ENCODE measurements at regions of chr4 and their contacts with region 1.

Region 1: GRCh38 chr4:139603576-139604387 is 47.8 kb upstream of the SETD7 start:
- DNase-seq: peak; percentile 56 to 85
- H3K4me3 ChIP-seq: no peak overlapping the region
- H3K27ac ChIP-seq: no peak overlapping the region
- H3K4me1 ChIP-seq: peaks cover 50% of the 10 kb centered on the region
- H3K27me3 ChIP-seq: no peaks in the 10 kb centered on the region
- CTCF ChIP-seq: peak; percentile 80

Region 2: DNA sequence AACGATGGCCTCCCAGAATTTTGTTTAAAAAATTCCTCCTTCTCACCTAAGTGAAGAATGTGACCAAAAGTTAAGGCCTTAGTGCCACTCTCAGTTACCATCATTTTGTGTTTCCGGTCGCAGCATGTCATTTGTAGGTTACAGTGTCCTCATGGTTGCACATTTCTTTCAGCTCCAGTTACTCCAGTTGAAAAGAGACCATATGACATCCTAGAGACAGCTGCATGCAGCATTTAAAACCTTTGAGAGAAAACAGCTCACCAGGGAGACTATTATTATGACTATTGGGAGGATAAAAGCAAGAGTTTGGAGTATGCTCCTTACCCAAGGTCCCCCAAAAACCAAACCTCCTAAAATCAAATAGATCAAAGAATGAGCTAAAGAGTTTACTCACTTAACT is 369.5 kb before region 1 on chr4:
- CTCF ChIA-PET with region 1: no interaction called
- POLR2A ChIA-PET with region 1: no interaction called
- intact Hi-C with region 1: no loop called
- DNase-seq: no peak
- H3K4me3 ChIP-seq: no peak overlapping the region
- H3K27ac ChIP-seq: no peak overlapping the region
- H3K4me1 ChIP-seq: no peaks in the 10 kb centered on the region
- H3K27me3 ChIP-seq: no peaks in the 10 kb centered on the region
- CTCF ChIP-seq: no peak

Region 3: DNA sequence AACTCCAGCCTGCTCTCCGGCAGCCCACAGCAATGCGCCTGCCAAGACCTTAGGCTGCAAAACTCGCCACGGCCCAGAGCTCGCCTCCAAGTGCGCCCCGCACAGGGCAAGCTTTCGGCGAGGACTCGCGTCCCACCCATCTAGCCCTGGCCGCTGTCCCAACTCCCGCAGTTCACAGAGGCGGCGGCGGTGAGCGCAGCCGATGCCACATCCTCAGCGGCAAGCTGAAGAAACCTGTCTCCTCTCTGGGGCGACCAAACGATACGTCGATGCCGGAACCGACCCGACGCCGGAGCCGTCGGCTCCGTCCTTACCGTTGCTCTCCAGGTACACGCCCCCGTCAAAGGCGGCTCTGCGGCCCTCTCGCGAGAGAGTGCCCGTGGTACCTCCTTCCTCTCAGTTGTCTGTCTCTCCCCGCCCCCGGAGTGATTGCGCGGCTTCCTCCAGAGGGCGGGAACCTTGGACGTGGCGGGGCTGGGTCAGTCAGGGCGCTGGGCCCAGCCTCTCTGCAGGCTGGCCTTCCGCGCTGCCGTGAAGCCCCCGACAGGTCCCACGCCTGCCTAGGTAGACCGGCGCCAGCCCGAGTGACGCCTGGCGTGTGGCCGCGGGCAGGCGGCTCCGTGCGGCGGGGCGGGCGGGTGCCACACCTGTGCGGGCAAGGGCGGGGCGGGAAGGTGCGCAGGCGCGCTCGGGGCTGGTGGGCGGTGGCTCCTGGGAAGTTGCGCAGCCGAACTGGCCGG is 150.2 kb before region 1 on chr4:
- CTCF ChIA-PET with region 1: no interaction called
- POLR2A ChIA-PET with region 1: interaction called, 12 read pairs
- intact Hi-C with region 1: no loop called
- DNase-seq: peak; percentile 86 to 96
- H3K4me3 ChIP-seq: peak overlapping the region; percentile 90
- H3K27ac ChIP-seq: peak overlapping the region; percentile 79
- H3K4me1 ChIP-seq: peaks cover 38% of the 10 kb centered on the region
- H3K27me3 ChIP-seq: no peaks in the 10 kb centered on the region
- CTCF ChIP-seq: peak; percentile 16; the same call in 1 of the 2 replicates

Region 4: DNA sequence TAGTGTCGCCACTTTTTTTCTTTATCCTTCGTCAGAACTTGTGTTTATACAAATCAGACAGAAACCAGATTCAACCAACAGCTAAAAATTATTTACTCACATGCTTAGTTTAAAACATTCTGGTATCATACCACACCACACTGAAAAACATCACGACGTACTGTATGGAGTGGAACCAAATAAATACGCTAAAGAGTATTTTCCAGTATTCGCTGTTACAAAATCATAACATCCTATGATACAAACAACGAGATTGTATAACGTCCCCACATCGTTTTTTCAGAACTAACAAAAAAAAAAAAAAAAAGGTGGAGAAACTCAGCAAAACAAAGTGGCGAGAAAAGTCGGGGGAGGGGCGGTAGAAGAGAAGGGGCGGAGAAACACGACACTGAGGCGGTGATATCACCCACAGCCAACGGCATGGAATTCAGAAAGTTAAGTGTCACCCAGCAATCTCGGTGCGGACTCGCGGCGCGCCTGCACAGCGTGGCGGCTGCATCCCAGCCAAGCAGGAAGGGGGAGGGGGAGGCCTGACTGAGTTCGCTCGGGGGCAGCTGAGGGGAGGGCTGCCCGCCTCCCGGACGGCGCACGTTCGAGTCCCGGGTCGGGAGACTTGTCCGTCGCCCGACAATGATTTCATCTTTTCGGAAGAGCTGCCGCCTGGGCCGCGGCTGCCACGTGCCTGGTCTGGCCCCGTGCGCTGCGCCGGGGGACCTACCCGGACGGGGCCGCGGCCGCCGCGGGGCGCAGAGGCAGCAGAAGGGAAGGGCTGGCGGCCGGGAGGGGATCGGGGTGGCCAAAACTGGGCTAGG is 48.7 kb before region 1 on chr4:
- CTCF ChIA-PET with region 1: interaction called, 12 read pairs
- POLR2A ChIA-PET with region 1: no interaction called
- intact Hi-C with region 1: no loop called
- DNase-seq: peak; percentile 62 to 88
- H3K4me3 ChIP-seq: peak overlapping the region; percentile 87
- H3K27ac ChIP-seq: peak overlapping the region; percentile 67
- H3K4me1 ChIP-seq: peaks cover 27% of the 10 kb centered on the region
- H3K27me3 ChIP-seq: no peaks in the 10 kb centered on the region
- CTCF ChIP-seq: no peak

Region 5: DNA sequence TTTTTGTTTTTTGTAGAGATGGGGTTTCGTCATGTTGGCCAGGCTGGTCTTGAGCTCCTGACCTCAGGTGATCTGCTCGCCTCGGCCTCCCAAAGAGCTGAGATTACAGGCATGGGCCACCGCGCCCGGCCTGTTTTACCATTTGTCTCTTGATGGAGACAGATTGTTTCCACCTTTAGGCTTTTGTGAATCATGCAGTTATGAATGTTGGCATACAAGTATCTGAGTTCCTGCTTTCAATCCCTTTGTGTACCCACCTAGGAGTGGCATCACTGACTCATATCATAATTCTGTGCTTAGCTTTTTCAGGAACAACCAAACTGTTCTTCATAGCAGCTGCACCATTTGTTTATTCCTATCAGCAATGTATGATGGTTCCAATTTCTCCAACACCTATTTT is 41.7 kb after region 1 on chr4:
- CTCF ChIA-PET with region 1: interaction called, 8 read pairs
- POLR2A ChIA-PET with region 1: no interaction called
- intact Hi-C with region 1: loop called (anchors 1 kb)
- DNase-seq: peak; percentile 88 to 99
- H3K4me3 ChIP-seq: no peak overlapping the region
- H3K27ac ChIP-seq: peak overlapping the region; percentile 82
- H3K4me1 ChIP-seq: peaks cover 64% of the 10 kb centered on the region
- H3K27me3 ChIP-seq: no peaks in the 10 kb centered on the region
- CTCF ChIP-seq: no peak

Region 6: DNA sequence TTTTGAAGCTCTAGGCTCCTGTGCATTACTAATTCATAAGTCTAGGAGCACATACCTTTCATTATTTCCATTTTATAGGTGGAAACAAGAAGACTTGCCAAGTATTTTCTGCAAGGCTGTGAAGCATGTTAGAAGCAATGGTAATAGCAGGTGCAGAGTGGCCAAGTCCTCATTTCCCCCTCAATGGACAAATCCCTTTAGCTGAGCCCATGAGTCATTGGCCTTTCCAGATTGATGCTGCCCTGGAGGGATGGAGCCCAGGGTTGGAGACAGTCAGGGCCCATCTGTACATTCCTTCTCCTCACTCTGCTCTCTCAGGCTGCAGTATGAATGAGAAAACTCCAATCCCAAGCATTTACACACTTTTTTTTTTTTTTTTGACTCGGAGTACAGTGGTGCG is 68.4 kb after region 1 on chr4:
- CTCF ChIA-PET with region 1: no interaction called
- POLR2A ChIA-PET with region 1: interaction called, 11 read pairs
- intact Hi-C with region 1: no loop called
- DNase-seq: no peak
- H3K4me3 ChIP-seq: no peak overlapping the region
- H3K27ac ChIP-seq: no peak overlapping the region
- H3K4me1 ChIP-seq: peaks cover 10% of the 10 kb centered on the region
- H3K27me3 ChIP-seq: no peaks in the 10 kb centered on the region
- CTCF ChIP-seq: no peak

Region 7: GRCh38 chr4:140343303-140343702 is 739.5 kb after region 1 on chr4:
- CTCF ChIA-PET with region 1: interaction called, 23 read pairs
- POLR2A ChIA-PET with region 1: no interaction called
- intact Hi-C with region 1: no loop called
- DNase-seq: peak; percentile 42 to 59
- H3K4me3 ChIP-seq: no peak overlapping the region
- H3K27ac ChIP-seq: no peak overlapping the region
- H3K4me1 ChIP-seq: no peaks in the 10 kb centered on the region; the same call in 1 of the 2 replicates
- H3K27me3 ChIP-seq: no peaks in the 10 kb centered on the region
- CTCF ChIP-seq: no peak

Measured in PC-9 (cell line).